ENCODE measurements at regions of chr10 and their contacts with region 1.

Region 1: DNA sequence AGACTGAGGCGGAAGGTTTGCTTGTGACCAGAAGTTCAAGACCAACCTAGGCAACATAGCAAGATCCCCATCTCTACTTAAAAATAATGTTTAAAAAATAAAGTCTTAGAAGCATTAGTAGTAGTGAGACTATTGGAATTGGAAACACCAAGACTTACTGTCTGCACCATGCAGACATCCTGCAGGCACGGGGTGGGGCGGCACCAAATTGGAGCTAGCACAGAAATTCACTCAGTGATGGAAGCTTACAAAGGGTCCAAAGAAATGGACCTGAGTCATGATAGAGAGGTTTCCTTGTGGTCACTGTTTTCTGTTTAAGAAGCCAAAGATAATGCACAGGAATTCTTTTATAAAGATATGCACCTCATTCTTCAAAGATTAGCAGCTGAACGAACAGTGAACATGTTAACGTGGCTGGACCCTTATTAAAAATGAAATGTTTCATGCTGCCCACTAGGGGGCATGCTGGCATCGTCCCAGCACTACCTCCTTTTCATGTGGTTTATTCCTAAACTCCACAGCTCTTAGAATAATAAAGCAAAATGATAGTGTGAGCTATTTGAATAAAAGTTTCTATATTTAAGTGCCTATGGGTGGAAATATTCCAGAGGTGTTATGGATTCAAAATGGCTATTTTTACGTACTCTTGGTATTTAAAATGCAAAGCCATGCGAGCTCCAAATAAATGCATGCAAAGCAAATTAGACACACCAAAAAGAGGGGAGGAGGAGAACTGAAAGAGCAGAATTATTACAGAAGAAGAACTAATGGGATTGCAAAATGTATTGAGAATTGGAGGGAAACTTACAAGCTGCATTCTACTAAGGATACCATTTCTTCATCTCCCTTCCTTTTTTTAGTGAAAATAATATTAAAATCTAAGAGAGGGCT is 28.6 kb downstream of the PDSS1 start:
- DNase-seq: peak; percentile 39
- ATAC-seq: peak; percentile 43
- H3K4me3 Mint-ChIP-seq: no peak overlapping the region
- H3K27ac Mint-ChIP-seq: no peak overlapping the region
- H3K4me1 Mint-ChIP-seq: peaks cover 8% of the 10 kb centered on the region
- H3K27me3 Mint-ChIP-seq: no peaks in the 10 kb centered on the region
- CTCF ChIP-seq: peak; percentile 98

Region 2: DNA sequence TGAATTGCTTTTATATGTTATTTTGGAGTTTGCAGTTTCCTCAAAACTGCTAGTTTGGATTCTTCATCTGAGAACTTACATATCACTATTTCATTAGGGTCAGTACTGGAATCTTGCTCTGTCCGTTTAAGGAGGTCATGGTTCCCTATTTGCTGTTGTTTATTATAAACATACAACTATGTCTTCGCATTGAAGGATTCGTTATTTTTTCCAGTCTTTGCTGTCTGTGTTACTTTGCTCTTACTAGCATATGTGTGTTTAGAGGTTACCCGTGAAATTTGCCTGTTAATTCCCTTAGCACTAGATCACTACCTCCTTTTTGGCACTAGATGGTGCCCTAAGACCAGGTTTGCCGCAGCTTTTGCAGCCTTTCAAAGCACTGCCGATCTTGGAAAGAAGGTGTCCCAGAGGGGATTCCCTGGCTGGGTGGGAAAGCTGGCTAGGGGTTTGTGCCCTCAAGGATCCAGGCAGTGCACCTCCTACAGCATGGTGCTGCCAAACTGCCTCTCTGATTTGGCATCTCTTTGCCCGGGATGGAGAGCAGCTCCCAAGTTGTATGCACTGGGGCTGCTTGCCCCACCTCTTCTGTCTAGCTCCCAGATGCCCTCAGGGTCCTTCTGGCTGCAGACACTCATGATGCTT is 391.0 kb before region 1 on chr10:
- CTCF ChIA-PET with region 1: interaction called, 23 read pairs
- POLR2A ChIA-PET with region 1: no interaction called
- intact Hi-C with region 1: no loop called
- DNase-seq: peak; percentile 75
- ATAC-seq: peak; percentile 94
- H3K4me3 Mint-ChIP-seq: peak overlapping the region; percentile 69
- H3K27ac Mint-ChIP-seq: peak overlapping the region; percentile 78
- H3K4me1 Mint-ChIP-seq: peaks cover 9% of the 10 kb centered on the region
- H3K27me3 Mint-ChIP-seq: no peaks in the 10 kb centered on the region
- CTCF ChIP-seq: peak; percentile 93

Region 3: GRCh38 chr10:26574783-26575182 is 151.3 kb before region 1 on chr10:
- CTCF ChIA-PET with region 1: no interaction called
- POLR2A ChIA-PET with region 1: no interaction called
- intact Hi-C with region 1: no loop called
- DNase-seq: no peak
- ATAC-seq: no peak
- H3K4me3 Mint-ChIP-seq: no peak overlapping the region
- H3K27ac Mint-ChIP-seq: no peak overlapping the region
- H3K4me1 Mint-ChIP-seq: peaks cover 2% of the 10 kb centered on the region
- H3K27me3 Mint-ChIP-seq: no peaks in the 10 kb centered on the region
- CTCF ChIP-seq: no peak

Region 4: GRCh38 chr10:26689399-26689798 is 36.7 kb before region 1 on chr10:
- CTCF ChIA-PET with region 1: no interaction called
- POLR2A ChIA-PET with region 1: no interaction called
- intact Hi-C with region 1: no loop called
- DNase-seq: no peak
- ATAC-seq: no peak
- H3K4me3 Mint-ChIP-seq: no peak overlapping the region
- H3K27ac Mint-ChIP-seq: no peak overlapping the region
- H3K4me1 Mint-ChIP-seq: peaks cover 18% of the 10 kb centered on the region
- H3K27me3 Mint-ChIP-seq: no peaks in the 10 kb centered on the region
- CTCF ChIP-seq: no peak

Region 5: DNA sequence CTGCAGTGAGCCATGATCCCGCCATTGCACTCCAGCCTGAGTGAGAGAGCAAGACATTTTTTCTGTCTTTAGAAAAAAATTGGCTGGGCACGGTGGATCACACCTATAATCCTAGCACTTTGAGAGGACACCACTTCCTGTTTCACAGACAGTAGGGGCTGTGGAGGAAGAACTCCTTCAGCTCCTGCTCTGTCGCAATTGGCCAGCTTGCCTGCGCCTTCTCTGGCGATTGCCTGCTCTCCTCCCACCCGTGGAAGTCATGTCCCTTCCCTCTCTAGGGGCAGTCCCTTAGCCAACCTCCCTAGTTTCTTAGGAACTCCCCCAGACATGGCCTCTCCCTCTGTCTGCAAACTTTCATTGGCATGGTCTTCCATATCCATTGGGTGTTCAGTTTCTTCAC is 19.9 kb before region 1 on chr10:
- CTCF ChIA-PET with region 1: interaction called, 16 read pairs
- POLR2A ChIA-PET with region 1: interaction called, 4 read pairs
- intact Hi-C with region 1: no loop called
- DNase-seq: no peak
- ATAC-seq: peak; percentile 24
- H3K4me3 Mint-ChIP-seq: no peak overlapping the region
- H3K27ac Mint-ChIP-seq: peak overlapping the region; percentile 28
- H3K4me1 Mint-ChIP-seq: peaks cover 11% of the 10 kb centered on the region
- H3K27me3 Mint-ChIP-seq: no peaks in the 10 kb centered on the region
- CTCF ChIP-seq: no peak

Region 6: DNA sequence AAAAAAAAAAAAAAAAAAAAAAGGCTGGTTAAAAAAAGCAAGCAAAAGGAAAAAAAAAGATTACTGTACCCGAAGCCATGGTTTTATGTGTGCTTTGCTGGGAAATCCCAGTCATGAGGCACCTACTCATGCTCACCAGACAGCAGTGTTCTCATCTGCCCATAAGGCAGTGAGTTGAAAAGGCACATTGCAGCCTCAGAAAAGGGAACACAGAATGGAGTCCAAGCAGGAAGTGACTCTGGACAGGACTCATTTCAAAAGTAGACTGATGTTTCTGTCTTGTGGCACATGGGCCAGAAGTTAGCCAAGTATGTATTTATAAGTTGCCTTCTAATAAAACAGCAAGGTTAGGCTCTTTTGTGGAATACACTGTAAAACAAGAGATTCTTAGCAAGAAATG is 11.6 kb after region 1 on chr10:
- CTCF ChIA-PET with region 1: interaction called, 28 read pairs
- POLR2A ChIA-PET with region 1: no interaction called
- intact Hi-C with region 1: no loop called
- DNase-seq: peak; percentile 60
- ATAC-seq: peak; percentile 92
- H3K4me3 Mint-ChIP-seq: no peak overlapping the region
- H3K27ac Mint-ChIP-seq: peak overlapping the region; percentile 80
- H3K4me1 Mint-ChIP-seq: peaks cover 34% of the 10 kb centered on the region
- H3K27me3 Mint-ChIP-seq: no peaks in the 10 kb centered on the region
- CTCF ChIP-seq: no peak

Region 7: GRCh38 chr10:26860443-26861204 is 134.5 kb after region 1 on chr10 and contains the start of gene ABI1:
- CTCF ChIA-PET with region 1: interaction called, 13 read pairs
- POLR2A ChIA-PET with region 1: no interaction called
- intact Hi-C with region 1: no loop called
- DNase-seq: peak; percentile 99
- ATAC-seq: peak; percentile 93
- H3K4me3 Mint-ChIP-seq: peak within 1 kb of the TSS; percentile 90
- H3K27ac Mint-ChIP-seq: peak within 1 kb of the TSS; percentile 100
- H3K4me1 Mint-ChIP-seq: peaks cover 23% of the 10 kb centered on the region
- H3K27me3 Mint-ChIP-seq: peaks cover 3% of the 10 kb centered on the region
- CTCF ChIP-seq: no peak
- total RNA-seq, gene ABI1: 32.4 to 37.2 TPM

Region 8: DNA sequence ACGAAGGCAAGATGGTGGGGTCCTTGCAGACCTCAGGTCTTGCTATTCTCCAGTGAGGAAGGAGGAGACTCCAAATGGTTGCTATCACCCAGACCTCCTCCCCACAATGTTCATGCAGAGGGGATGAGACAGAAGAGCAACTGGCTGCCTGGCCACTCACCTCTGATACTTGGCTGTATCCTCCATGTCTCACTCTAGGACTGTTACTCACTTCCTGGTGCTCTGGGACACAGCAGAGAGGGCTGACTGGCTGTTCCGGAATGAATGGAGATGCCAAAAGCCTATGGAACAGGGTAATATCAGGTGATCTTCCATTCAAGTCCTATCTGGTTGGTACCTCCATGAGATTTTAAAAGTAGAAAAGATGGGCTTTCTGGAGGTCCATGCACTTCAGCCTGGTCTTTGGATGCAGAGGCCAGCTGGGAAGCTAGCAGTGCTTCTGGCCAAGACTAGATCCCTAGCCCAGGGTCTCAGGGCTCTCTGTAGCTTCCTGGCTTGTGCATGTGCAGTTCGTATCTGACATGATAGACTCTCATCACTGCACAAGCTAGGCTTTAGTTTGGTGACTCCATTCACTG is 161.6 kb after region 1 on chr10:
- CTCF ChIA-PET with region 1: interaction called, 72 read pairs
- POLR2A ChIA-PET with region 1: no interaction called
- intact Hi-C with region 1: loop called (anchors 2 kb)
- DNase-seq: no peak
- ATAC-seq: no peak
- H3K4me3 Mint-ChIP-seq: no peak overlapping the region
- H3K27ac Mint-ChIP-seq: no peak overlapping the region
- H3K4me1 Mint-ChIP-seq: no peaks in the 10 kb centered on the region
- H3K27me3 Mint-ChIP-seq: peaks cover 2% of the 10 kb centered on the region
- CTCF ChIP-seq: no peak